Colonic mucosa (tissue), 4 donors: ENCODE measurements at regions of chr1 and their contacts with region 1.

Region 1: DNA sequence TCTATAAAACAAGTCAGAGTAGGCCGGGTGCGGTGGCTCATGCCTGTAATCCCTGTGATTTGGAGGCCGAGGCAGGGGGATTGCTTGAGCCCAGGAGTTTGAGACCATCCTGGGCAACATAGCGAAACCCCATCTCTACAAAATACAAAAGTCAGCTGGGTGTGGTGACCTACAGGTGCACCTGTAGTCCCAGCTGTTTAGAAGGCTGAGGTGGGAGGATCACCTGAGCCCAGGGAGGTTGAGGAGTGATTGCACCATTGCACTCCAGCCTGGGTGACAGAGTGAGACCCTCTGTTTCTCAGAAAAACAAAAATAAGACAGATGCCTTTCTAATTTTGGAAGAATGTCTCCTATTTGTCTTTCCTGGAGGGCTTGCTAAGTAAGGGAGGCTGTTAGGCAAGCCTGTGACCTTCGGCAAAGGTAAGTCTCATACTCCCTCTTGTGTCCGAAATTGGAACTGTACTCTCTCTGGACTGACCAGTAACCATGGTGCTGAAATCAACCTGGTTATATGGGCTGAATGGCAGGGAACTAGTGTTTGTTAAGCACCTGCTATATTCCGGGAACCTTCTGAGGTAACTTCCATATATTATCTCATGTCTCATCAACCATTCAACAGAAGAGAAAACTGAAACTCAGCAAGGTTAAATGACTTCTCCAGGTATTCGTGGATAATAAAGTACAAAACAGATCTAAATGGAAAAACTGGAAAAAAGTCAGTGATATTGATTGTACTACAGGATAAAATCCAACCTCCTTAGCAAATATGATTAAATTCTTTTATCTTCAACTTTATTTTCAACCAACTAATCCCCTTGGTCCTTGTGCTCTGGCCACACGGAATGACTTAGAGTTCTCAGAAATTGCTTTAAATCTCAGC is 11.8 kb upstream of the RAB3B start:
- DNase-seq: peak; percentile 82
- H3K4me3 ChIP-seq: no peak overlapping the region
- H3K27ac ChIP-seq: no peak overlapping the region
- H3K4me1 ChIP-seq: no peaks in the 10 kb centered on the region
- H3K27me3 ChIP-seq: no peaks in the 10 kb centered on the region
- CTCF ChIP-seq: peak; percentile 89

Region 2: DNA sequence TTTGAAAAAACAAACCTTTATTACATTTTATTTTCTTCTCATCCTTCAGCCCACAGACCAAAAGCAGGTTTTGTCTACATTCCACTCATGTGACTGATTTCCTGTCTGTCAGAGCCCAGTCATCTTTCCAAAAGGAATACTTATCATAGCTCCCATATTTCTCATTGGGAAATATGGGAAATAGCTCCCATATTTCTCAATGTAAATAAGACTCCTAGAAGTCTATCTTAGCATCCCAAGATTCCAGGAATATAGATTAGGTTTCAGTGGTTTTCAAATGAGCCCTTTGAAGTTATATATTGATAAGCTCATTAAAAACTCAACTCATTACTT is 104.6 kb before region 1 on chr1:
- intact Hi-C with region 1: loop called (anchors 2 kb)
- DNase-seq: no peak
- H3K4me3 ChIP-seq: no peak overlapping the region
- H3K27ac ChIP-seq: no peak overlapping the region
- H3K4me1 ChIP-seq: no peaks in the 10 kb centered on the region
- H3K27me3 ChIP-seq: peaks cover 10% of the 10 kb centered on the region
- CTCF ChIP-seq: no peak